BJ (cell line): ENCODE measurements at regions of chr4 and their contacts with region 1.

Region 1: GRCh38 chr4:121192480-121192879 is 28.4 kb upstream of the TNIP3 start:
- DNase-seq: no peak
- H3K4me3 ChIP-seq: no peak overlapping the region
- H3K27me3 ChIP-seq: no peaks in the 10 kb centered on the region
- CTCF ChIP-seq: peak; percentile 71

Region 2: DNA sequence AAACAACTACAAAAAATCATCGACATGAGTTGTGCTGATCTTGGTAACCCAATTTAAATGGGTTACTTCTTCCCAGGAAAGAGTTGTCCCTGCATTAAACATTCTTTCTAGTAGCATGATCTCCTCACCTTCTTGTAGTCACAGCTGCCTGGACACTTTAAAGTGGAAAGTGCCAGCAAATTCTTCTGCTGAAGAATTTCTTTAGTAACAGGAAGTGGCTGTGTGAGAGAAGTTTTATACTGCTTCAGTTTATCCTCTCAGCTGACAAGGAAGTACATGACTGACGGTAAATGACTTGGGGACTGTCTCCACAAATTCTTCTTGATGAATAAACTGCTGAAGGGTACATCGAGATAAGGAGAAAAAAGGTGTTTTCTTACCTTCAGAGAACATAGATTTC is 10.2 kb before region 1 on chr4:
- CTCF ChIA-PET with region 1: interaction called, 31 read pairs
- POLR2A ChIA-PET with region 1: no interaction called
- DNase-seq: no peak
- H3K4me3 ChIP-seq: no peak overlapping the region
- H3K27me3 ChIP-seq: no peaks in the 10 kb centered on the region
- CTCF ChIP-seq: no peak

Region 3: GRCh38 chr4:121243485-121243884 is 51.0 kb after region 1 on chr4:
- CTCF ChIA-PET with region 1: interaction called, 182 read pairs
- POLR2A ChIA-PET with region 1: no interaction called
- DNase-seq: no peak
- H3K4me3 ChIP-seq: peak overlapping the region; percentile 22
- H3K27me3 ChIP-seq: no peaks in the 10 kb centered on the region
- CTCF ChIP-seq: no peak

Region 4: GRCh38 chr4:121252224-121252806 is 59.8 kb after region 1 on chr4:
- CTCF ChIA-PET with region 1: interaction called, 182 read pairs
- POLR2A ChIA-PET with region 1: no interaction called
- DNase-seq: no peak
- H3K4me3 ChIP-seq: no peak overlapping the region
- H3K27me3 ChIP-seq: no peaks in the 10 kb centered on the region
- CTCF ChIP-seq: peak; percentile 81

Region 5: DNA sequence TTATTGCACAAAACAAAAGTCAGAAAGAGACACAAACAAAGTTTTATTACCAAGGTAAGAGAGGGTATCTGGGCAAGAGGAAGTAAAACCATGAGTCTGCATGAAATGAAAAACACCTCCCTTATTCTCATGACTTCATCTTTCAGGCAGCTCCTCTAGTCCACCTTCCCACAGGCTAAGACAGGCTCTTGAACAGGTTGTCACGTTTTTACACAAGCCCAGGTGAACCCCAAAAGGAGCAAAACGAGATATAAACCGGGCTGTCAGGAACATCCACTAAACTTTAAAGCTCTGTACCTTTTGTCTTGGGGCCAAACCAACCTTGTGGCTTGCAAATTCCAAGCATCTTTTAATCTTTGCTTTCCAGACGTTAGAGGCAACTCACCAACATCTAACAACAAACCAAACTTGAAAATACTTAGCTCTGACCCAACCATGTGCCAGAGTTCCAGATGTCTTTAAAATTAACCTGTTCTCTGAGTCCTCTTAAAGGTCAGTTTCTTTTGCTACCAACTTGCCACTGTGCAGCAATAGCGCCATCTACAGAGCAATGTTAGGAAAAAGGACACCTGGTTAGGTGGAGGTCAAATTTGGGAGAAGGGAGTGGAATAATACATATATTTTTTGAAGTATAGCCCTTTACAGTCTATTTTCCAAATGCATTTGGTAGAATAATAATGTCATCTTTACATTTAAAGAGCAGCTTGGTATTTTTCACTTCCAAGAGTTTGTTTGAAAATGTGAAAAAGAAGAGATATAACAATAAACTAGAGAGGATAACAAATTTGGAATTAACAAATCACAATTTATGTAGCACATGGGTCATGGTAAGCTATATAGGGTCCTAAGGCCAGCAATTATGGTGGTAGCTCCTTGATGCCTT is 115.2 kb after region 1 on chr4:
- CTCF ChIA-PET with region 1: interaction called, 34 read pairs
- POLR2A ChIA-PET with region 1: no interaction called
- DNase-seq: peak; percentile 8
- H3K4me3 ChIP-seq: no peak overlapping the region
- H3K27me3 ChIP-seq: peaks cover 2% of the 10 kb centered on the region; the same call in 1 of the 2 replicates
- CTCF ChIP-seq: peak; percentile 80